ENCODE measurements at regions of chr3 and their contacts with region 1.

Region 1: GRCh38 chr3:195001961-195002861 is 268.7 kb downstream of the XXYLT1 start:
- DNase-seq: peak; percentile 4
- ATAC-seq: peak; percentile 95
- H3K4me3 ChIP-seq: no peak overlapping the region
- H3K27ac ChIP-seq: no peak overlapping the region
- H3K4me1 ChIP-seq: no peaks in the 10 kb centered on the region
- H3K27me3 ChIP-seq: peaks cover 2% of the 10 kb centered on the region in 2 experiments; a peak in 1 of 4 replicates
- CTCF ChIP-seq: peak; percentile 66 to 81 (median 77)
- EP300 ChIP-seq: no peak
- POLR2A ChIP-seq: no peak
- RAD21 ChIP-seq: peak; percentile 74

Region 2: GRCh38 chr3:194967151-194968117 is 34.8 kb before region 1 on chr3:
- CTCF ChIA-PET with region 1: no interaction called
- POLR2A ChIA-PET with region 1: no interaction called
- RAD21 ChIA-PET with region 1: no interaction called
- SMC1A ChIA-PET with region 1: no interaction called
- in situ Hi-C with region 1: no loop called
- intact Hi-C with region 1: no loop called
- DNase-seq: no peak
- ATAC-seq: no peak
- H3K4me3 ChIP-seq: no peak overlapping the region
- H3K27ac ChIP-seq: no peak overlapping the region
- H3K4me1 ChIP-seq: no peaks in the 10 kb centered on the region
- H3K27me3 ChIP-seq: peaks cover 0 to 2% of the 10 kb centered on the region in 2 experiments; a peak in 3 of 4 replicates
- CTCF ChIP-seq: no peak
- EP300 ChIP-seq: no peak
- POLR2A ChIP-seq: no peak
- RAD21 ChIP-seq: no peak

Region 3: GRCh38 chr3:195106418-195106906 is 104.3 kb after region 1 on chr3:
- CTCF ChIA-PET with region 1: interaction called, 14 read pairs
- POLR2A ChIA-PET with region 1: no interaction called
- RAD21 ChIA-PET with region 1: interaction called, 4 read pairs
- SMC1A ChIA-PET with region 1: interaction called, 10 read pairs
- in situ Hi-C with region 1: no loop called
- intact Hi-C with region 1: loop called (anchors 1 kb)
- DNase-seq: no peak
- ATAC-seq: peak; percentile 99
- H3K4me3 ChIP-seq: no peak overlapping the region
- H3K27ac ChIP-seq: no peak overlapping the region
- H3K4me1 ChIP-seq: no peaks in the 10 kb centered on the region; the same call in 1 of the 2 replicates
- H3K27me3 ChIP-seq: no peaks in the 10 kb centered on the region
- CTCF ChIP-seq: peak; percentile 92 to 99 (median 95)
- EP300 ChIP-seq: no peak
- POLR2A ChIP-seq: no peak
- RAD21 ChIP-seq: peak; percentile 93

Measured in GM12878 (cell line).